ENCODE measurements at regions of chr11 and their contacts with region 1.

Region 1: DNA sequence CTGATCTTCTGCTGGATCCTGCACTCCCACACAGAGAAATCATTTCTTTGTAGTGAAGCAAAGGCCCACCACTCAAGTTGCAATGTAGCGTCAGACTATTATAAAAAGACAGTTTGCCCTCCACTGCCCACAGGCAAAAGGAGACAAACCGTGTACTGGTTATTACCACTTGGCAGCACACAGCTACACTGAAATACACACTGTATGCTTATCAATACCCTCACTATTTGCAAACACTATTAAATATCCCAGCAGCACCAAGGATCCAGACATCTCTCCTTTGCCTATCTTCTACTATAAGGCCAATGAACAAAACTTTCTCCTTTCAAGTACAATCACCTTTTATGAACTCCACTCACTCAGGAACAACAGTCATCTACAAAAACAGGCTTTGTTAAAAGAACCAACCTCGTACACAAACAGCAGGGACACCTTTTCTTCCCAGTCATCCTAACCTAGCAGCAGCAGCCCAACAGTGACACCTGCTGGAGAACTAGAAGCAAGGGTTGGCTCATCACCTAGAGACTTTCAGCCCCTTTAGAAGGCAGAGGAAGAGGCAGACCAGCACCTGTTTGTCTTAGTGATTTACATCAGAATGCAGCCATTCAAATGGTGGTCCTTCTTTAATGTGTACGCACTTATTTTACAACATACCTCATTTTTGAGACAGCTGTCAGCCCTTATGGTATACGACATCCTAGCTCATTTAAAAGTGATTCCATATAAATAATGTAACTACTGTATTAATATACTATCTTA is 56.1 kb downstream of the AMBRA1 start:
- DNase-seq: peak in 2 of 3 donors; percentile 42 to 66
- ATAC-seq: peak; percentile 92 to 97 (median 94)
- H3K4me3 ChIP-seq: no peak overlapping the region
- H3K27ac ChIP-seq: no peak overlapping the region
- H3K4me1 ChIP-seq: peaks cover 0 to 5% (median 0%) of the 10 kb centered on the region in 4 donors
- H3K27me3 ChIP-seq: no peaks in the 10 kb centered on the region
- CTCF ChIP-seq: peak; percentile 86 to 95 (median 92)
- POLR2A ChIP-seq: no peak

Region 2: GRCh38 chr11:46389450-46390253 is 148.1 kb before region 1 on chr11:
- intact Hi-C with region 1: loop called (anchors 10 kb)
- DNase-seq: peak; percentile 71 to 81 (median 80)
- ATAC-seq: peak; percentile 72 to 76 (median 74)
- H3K4me3 ChIP-seq: peak overlapping the region; percentile 30 to 55 (median 42)
- H3K27ac ChIP-seq: no peak overlapping the region
- H3K4me1 ChIP-seq: peaks cover 0 to 35% (median 3%) of the 10 kb centered on the region in 4 donors
- H3K27me3 ChIP-seq: peaks cover 7 to 15% of the 10 kb centered on the region in 2 donors
- CTCF ChIP-seq: peak; percentile 60 to 94 (median 90)
- POLR2A ChIP-seq: no peak

Region 3: GRCh38 chr11:46438211-46438610 is 99.5 kb before region 1 on chr11:
- intact Hi-C with region 1: no loop called
- DNase-seq: no peak
- ATAC-seq: no peak
- H3K4me3 ChIP-seq: no peak overlapping the region
- H3K27ac ChIP-seq: no peak overlapping the region
- H3K4me1 ChIP-seq: no peaks in the 10 kb centered on the region
- H3K27me3 ChIP-seq: no peaks in the 10 kb centered on the region
- CTCF ChIP-seq: no peak
- POLR2A ChIP-seq: no peak

Region 4: GRCh38 chr11:46485856-46486443 is 51.8 kb before region 1 on chr11:
- intact Hi-C with region 1: no loop called
- DNase-seq: no peak
- ATAC-seq: no peak
- H3K4me3 ChIP-seq: no peak overlapping the region
- H3K27ac ChIP-seq: no peak overlapping the region
- H3K4me1 ChIP-seq: no peaks in the 10 kb centered on the region
- H3K27me3 ChIP-seq: no peaks in the 10 kb centered on the region
- CTCF ChIP-seq: no peak
- POLR2A ChIP-seq: no peak

Region 5: DNA sequence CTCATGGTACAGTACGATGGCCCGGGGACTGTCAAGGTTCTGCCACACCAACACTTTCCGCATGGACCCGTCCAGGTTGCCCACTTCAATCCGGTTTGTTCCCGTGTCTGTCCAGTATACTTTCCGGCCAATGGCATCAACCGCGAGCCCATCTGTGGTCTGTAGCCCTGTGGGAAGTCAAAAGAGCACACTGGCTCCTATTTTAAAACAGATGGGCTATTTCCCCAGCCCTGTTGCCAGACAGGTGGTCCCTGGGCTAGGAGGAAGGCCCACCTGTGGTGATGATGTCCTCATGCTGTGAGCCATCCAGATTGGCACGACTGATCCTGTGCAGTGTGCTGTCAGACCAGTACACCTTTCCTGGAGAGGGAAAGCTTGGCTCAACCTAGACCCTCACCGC is 338.8 kb after region 1 on chr11:
- intact Hi-C with region 1: no loop called
- DNase-seq: no peak
- ATAC-seq: no peak
- H3K4me3 ChIP-seq: no peak overlapping the region
- H3K27ac ChIP-seq: no peak overlapping the region
- H3K4me1 ChIP-seq: no peaks in the 10 kb centered on the region
- H3K27me3 ChIP-seq: no peaks in the 10 kb centered on the region
- CTCF ChIP-seq: no peak
- POLR2A ChIP-seq: no peak

Measured in right lobe of liver (tissue), 6 donors.